Spleen (tissue), 13 donors: ENCODE measurements at regions of chr22 and their contacts with region 1.

Region 1: GRCh38 chr22:17903564-17904295 is 120.6 kb downstream of the MICAL3 start:
- DNase-seq: no peak
- H3K4me3 ChIP-seq: no peak overlapping the region
- H3K27ac ChIP-seq: peak overlapping the region in 2 of 8 donors; percentile 12 to 14
- H3K4me1 ChIP-seq: peaks cover 0 to 26% (median 7%) of the 10 kb centered on the region in 6 donors
- H3K27me3 ChIP-seq: no peaks in the 10 kb centered on the region
- CTCF ChIP-seq: no peak
- POLR2A ChIP-seq: no peak

Region 2: GRCh38 chr22:18012531-18012930 is 108.8 kb after region 1 on chr22:
- intact Hi-C with region 1: no loop called
- DNase-seq: no peak
- H3K4me3 ChIP-seq: no peak overlapping the region
- H3K27ac ChIP-seq: no peak overlapping the region
- H3K4me1 ChIP-seq: peaks cover 0 to 28% (median 9%) of the 10 kb centered on the region in 6 donors
- H3K27me3 ChIP-seq: no peaks in the 10 kb centered on the region
- CTCF ChIP-seq: no peak
- POLR2A ChIP-seq: no peak

Region 3: DNA sequence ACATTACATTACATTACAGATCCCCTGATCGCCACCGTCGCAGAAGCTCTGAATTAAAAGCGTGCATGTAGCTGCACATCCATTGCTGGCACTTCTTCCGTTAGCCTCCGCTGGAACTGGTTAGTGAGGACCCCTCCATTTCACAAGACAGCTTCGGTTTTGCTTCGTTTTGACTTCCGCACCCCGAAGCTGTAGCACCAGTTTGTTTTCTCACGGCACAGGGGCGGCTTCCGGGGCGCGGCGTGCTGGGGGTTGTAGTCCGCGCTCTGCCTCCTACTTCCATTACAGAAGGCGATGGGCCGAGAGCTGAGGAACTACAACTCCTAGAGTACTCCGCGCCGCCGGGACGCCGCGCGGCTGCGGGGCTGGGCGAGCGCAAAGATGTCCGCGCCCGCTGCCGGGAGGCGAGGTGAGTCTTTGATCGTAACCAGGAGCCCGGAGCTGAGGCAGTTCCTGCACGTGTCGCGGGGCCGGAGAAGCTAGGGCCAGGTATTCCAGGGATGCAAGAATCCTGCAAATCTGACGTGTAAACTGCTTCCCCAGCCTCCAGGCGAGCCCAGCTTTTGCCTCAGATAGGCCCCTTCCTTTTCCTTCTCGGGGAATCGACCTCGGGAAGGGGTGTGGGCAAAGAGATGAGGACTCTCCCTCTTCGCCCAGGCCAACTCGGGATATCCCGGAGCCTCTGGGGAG is 174.1 kb after region 1 on chr22 and contains the start of gene PEX26:
- intact Hi-C with region 1: loop called (anchors 10 kb)
- DNase-seq: peak; percentile 98
- H3K4me3 ChIP-seq: peak within 1 kb of the TSS; percentile 59 to 100 (median 92)
- H3K27ac ChIP-seq: peak within 1 kb of the TSS; percentile 79 to 95 (median 88)
- H3K4me1 ChIP-seq: peaks cover 23 to 63% (median 46%) of the 10 kb centered on the region in 6 donors
- H3K27me3 ChIP-seq: no peaks in the 10 kb centered on the region
- CTCF ChIP-seq: peak in 2 of 11 experiments; percentile 13 to 25
- POLR2A ChIP-seq: peak in 1 of 3 donors; percentile 42
- total RNA-seq, gene PEX26: 29.2 to 41.0 (median 37.4) TPM